ENCODE measurements at regions of chr6 and their contacts with region 1.

Region 1: GRCh38 chr6:3209114-3210023 is 18.1 kb downstream of the TUBB2B start:
- DNase-seq: peak; percentile 93 to 97 (median 96)
- ATAC-seq: peak; percentile 98
- H3K4me3 ChIP-seq: no peak overlapping the region
- H3K27ac ChIP-seq: peak overlapping the region; percentile 75
- H3K4me1 ChIP-seq: peaks cover 33 to 44% of the 10 kb centered on the region in 2 experiments
- H3K27me3 ChIP-seq: no peaks in the 10 kb centered on the region
- CTCF ChIP-seq: peak; percentile 57 to 84 (median 82)
- EP300 ChIP-seq: peak; percentile 65
- POLR2A ChIP-seq: peak; percentile 47; the same call in 1 of the 2 replicates
- RAD21 ChIP-seq: peak; percentile 86 to 91

Region 2: DNA sequence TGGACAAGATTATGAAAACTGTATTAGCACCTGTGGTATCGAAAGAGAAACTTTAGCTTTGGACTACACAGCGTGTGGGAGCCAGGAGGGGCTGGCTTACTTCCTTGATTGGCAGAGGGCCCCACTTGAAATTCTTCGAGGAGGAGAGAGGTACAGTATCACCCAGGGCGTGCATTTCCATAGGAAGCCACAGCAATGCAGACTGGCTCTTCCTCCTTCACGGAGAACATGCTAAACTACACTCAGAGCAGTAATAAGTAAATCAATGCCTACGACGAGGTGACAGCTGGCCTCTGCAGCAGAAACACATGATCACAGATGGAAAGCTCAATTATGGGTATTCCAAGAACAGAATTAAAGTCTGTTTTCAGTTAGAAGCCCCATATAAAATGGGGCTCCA is 502.8 kb before region 1 on chr6:
- CTCF ChIA-PET with region 1: no interaction called
- POLR2A ChIA-PET with region 1: no interaction called
- in situ Hi-C with region 1: no loop called
- intact Hi-C with region 1: no loop called
- DNase-seq: no peak
- ATAC-seq: no peak
- H3K4me3 ChIP-seq: no peak overlapping the region
- H3K27ac ChIP-seq: no peak overlapping the region
- H3K4me1 ChIP-seq: no peaks in the 10 kb centered on the region
- H3K27me3 ChIP-seq: peaks cover 23 to 38% of the 10 kb centered on the region in 2 experiments
- CTCF ChIP-seq: no peak
- EP300 ChIP-seq: no peak
- POLR2A ChIP-seq: no peak
- RAD21 ChIP-seq: no peak

Region 3: DNA sequence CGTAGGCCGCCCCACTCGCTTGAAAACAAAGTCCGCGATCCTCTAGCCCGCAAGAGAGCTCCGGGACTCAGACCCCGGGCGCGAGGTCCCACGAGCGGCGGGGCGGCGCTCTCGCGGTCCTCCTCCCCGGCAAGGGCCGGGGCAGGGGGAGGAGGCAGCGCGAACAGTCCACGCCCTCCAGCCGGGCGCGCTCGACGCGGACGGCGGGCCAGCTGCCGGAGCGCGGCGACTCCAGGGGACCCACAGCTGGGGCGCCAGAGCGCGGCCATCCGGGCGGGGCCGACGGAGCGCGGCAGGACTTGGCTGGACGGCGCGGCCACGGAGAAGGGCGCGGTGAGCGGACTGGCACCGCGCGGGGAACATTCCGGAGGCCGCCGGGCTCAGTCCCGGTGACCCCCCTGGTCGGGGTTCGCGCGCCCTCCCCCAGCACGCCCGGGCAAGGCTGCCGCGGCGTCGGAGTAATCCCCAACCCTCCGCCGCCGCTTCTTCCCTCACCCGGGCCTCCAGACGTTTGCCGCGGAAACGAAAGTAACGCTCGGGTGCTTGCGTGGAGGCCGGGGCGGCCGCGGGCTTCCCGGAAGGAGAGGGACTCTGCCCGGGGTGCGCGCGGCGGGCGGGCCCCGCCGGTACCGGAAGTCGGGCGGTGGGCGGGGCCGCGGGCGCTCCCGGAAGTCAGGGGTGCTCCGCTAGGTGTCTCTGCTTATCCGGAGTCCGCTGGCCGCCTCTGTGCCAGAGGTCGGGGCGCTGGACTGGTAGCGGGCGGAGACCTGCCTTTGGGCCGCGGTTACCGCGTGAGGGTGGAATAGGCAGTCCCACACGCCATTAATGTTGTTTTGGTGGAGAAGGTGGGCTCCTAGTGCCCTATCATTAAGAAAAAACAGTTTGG is 140.8 kb before region 1 on chr6 and contains the start of gene RIPK1:
- CTCF ChIA-PET with region 1: no interaction called
- POLR2A ChIA-PET with region 1: interaction called, 3 read pairs
- in situ Hi-C with region 1: no loop called
- intact Hi-C with region 1: loop called (anchors 5 kb)
- DNase-seq: peak; percentile 96 to 98 (median 96)
- ATAC-seq: peak; percentile 85
- H3K4me3 ChIP-seq: peak within 1 kb of the TSS; percentile 84
- H3K27ac ChIP-seq: peak within 1 kb of the TSS; percentile 97
- H3K4me1 ChIP-seq: peaks cover 19 to 30% of the 10 kb centered on the region in 2 experiments
- H3K27me3 ChIP-seq: no peaks in the 10 kb centered on the region
- CTCF ChIP-seq: peak; percentile 57 to 68 (median 59); a peak in 5 of 6 replicates
- EP300 ChIP-seq: peak; percentile 51
- POLR2A ChIP-seq: peak; percentile 95
- RAD21 ChIP-seq: peak in 1 of 2 experiments; percentile 34; a peak in 3 of 4 replicates
- polyA plus RNA-seq, gene RIPK1: 3.8 to 4.5 TPM

Region 4: GRCh38 chr6:3124667-3125066 is 84.7 kb before region 1 on chr6:
- CTCF ChIA-PET with region 1: interaction called, 5 read pairs
- POLR2A ChIA-PET with region 1: no interaction called
- in situ Hi-C with region 1: no loop called
- intact Hi-C with region 1: loop called (anchors 1 kb)
- DNase-seq: no peak
- ATAC-seq: no peak
- H3K4me3 ChIP-seq: no peak overlapping the region
- H3K27ac ChIP-seq: no peak overlapping the region
- H3K4me1 ChIP-seq: peaks cover 8 to 9% of the 10 kb centered on the region in 2 experiments; a peak in 4 of 5 replicates
- H3K27me3 ChIP-seq: no peaks in the 10 kb centered on the region
- CTCF ChIP-seq: no peak
- EP300 ChIP-seq: no peak
- POLR2A ChIP-seq: no peak
- RAD21 ChIP-seq: no peak

Region 5: GRCh38 chr6:3157131-3157927 is 52.0 kb before region 1 on chr6 and contains the start of gene TUBB2A:
- CTCF ChIA-PET with region 1: no interaction called
- POLR2A ChIA-PET with region 1: interaction called, 15 read pairs
- in situ Hi-C with region 1: no loop called
- intact Hi-C with region 1: loop called (anchors 2 kb)
- DNase-seq: peak; percentile 93 to 99 (median 96)
- ATAC-seq: peak; percentile 74
- H3K4me3 ChIP-seq: peak within 1 kb of the TSS; percentile 74
- H3K27ac ChIP-seq: peak within 1 kb of the TSS; percentile 90
- H3K4me1 ChIP-seq: peaks cover 36 to 40% of the 10 kb centered on the region in 2 experiments
- H3K27me3 ChIP-seq: no peaks in the 10 kb centered on the region
- CTCF ChIP-seq: peak; percentile 56 to 95 (median 87)
- EP300 ChIP-seq: no peak; the same call in 1 of the 2 replicates
- POLR2A ChIP-seq: peak; percentile 95
- RAD21 ChIP-seq: peak; percentile 71 to 74
- polyA plus RNA-seq, gene TUBB2A: 3.6 to 6.3 TPM

Region 6: GRCh38 chr6:3221578-3221977 is 12.2 kb after region 1 on chr6:
- CTCF ChIA-PET with region 1: no interaction called
- POLR2A ChIA-PET with region 1: interaction called, 21 read pairs
- in situ Hi-C with region 1: no loop called
- intact Hi-C with region 1: no loop called
- DNase-seq: no peak
- ATAC-seq: no peak
- H3K4me3 ChIP-seq: no peak overlapping the region
- H3K27ac ChIP-seq: no peak overlapping the region
- H3K4me1 ChIP-seq: peaks cover 1 to 6% of the 10 kb centered on the region in 2 experiments
- H3K27me3 ChIP-seq: peaks cover 29 to 51% of the 10 kb centered on the region in 2 experiments
- CTCF ChIP-seq: no peak
- EP300 ChIP-seq: no peak
- POLR2A ChIP-seq: no peak
- RAD21 ChIP-seq: no peak

Measured in K562 (cell line).